ENCODE measurements at regions of chr3 and their contacts with region 1.

Region 1: GRCh38 chr3:152471814-152472671 is 203.3 kb downstream of the MBNL1 start:
- DNase-seq: peak; percentile 86
- ATAC-seq: peak; percentile 82
- H3K4me3 ChIP-seq: peak overlapping the region; percentile 32 to 63 (median 54)
- H3K4me3 Mint-ChIP-seq: peak overlapping the region; percentile 60
- H3K27ac ChIP-seq: peak overlapping the region; percentile 75 to 83
- H3K27ac Mint-ChIP-seq: peak overlapping the region; percentile 84
- H3K4me1 ChIP-seq: peaks cover 12 to 14% of the 10 kb centered on the region in 2 donors
- H3K4me1 Mint-ChIP-seq: peaks cover 21% of the 10 kb centered on the region
- H3K27me3 ChIP-seq: no peaks in the 10 kb centered on the region
- H3K27me3 Mint-ChIP-seq: no peaks in the 10 kb centered on the region
- CTCF ChIP-seq: peak; percentile 89

Region 2: GRCh38 chr3:152060701-152061100 is 411.3 kb before region 1 on chr3:
- CTCF ChIA-PET with region 1: no interaction called
- POLR2A ChIA-PET with region 1: no interaction called
- intact Hi-C with region 1: no loop called
- DNase-seq: no peak
- ATAC-seq: no peak
- H3K4me3 ChIP-seq: no peak overlapping the region
- H3K4me3 Mint-ChIP-seq: no peak overlapping the region
- H3K27ac ChIP-seq: no peak overlapping the region
- H3K27ac Mint-ChIP-seq: no peak overlapping the region
- H3K4me1 ChIP-seq: no peaks in the 10 kb centered on the region
- H3K4me1 Mint-ChIP-seq: no peaks in the 10 kb centered on the region
- H3K27me3 ChIP-seq: no peaks in the 10 kb centered on the region
- H3K27me3 Mint-ChIP-seq: peaks cover 3% of the 10 kb centered on the region
- CTCF ChIP-seq: no peak

Region 3: DNA sequence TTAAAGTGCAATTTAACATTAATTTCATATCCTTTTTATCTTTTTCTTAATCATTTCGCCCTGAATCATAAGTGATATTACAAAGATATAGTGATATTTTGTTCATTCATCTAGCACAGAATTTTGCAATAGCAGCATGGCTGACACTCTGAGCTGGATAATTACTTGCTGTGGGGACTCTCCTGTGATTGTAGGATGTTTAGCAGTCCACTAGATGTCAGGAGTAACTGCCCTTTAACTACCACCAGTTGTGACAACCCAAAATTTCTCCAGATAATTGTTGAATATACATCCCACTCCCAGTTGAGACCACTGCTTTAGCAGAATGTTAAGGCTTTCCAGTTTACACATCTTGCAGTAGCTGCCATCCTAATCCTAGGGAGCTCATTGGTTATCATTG is 400.1 kb before region 1 on chr3:
- CTCF ChIA-PET with region 1: interaction called, 20 read pairs
- POLR2A ChIA-PET with region 1: no interaction called
- intact Hi-C with region 1: loop called (anchors 2 kb)
- DNase-seq: peak; percentile 30
- ATAC-seq: no peak
- H3K4me3 ChIP-seq: no peak overlapping the region
- H3K4me3 Mint-ChIP-seq: no peak overlapping the region
- H3K27ac ChIP-seq: no peak overlapping the region
- H3K27ac Mint-ChIP-seq: no peak overlapping the region
- H3K4me1 ChIP-seq: no peaks in the 10 kb centered on the region
- H3K4me1 Mint-ChIP-seq: no peaks in the 10 kb centered on the region
- H3K27me3 ChIP-seq: peaks cover 0 to 3% (median 0%) of the 10 kb centered on the region in 4 experiments
- H3K27me3 Mint-ChIP-seq: no peaks in the 10 kb centered on the region
- CTCF ChIP-seq: peak; percentile 49

Region 4: GRCh38 chr3:152399374-152399773 is 72.7 kb before region 1 on chr3:
- CTCF ChIA-PET with region 1: no interaction called
- POLR2A ChIA-PET with region 1: no interaction called
- intact Hi-C with region 1: no loop called
- DNase-seq: no peak
- ATAC-seq: no peak
- H3K4me3 ChIP-seq: no peak overlapping the region
- H3K4me3 Mint-ChIP-seq: no peak overlapping the region
- H3K27ac ChIP-seq: peak overlapping the region in 1 of 2 donors; percentile 61
- H3K27ac Mint-ChIP-seq: no peak overlapping the region
- H3K4me1 ChIP-seq: peaks cover 11 to 47% of the 10 kb centered on the region in 2 donors
- H3K4me1 Mint-ChIP-seq: peaks cover 60% of the 10 kb centered on the region
- H3K27me3 ChIP-seq: no peaks in the 10 kb centered on the region
- H3K27me3 Mint-ChIP-seq: no peaks in the 10 kb centered on the region
- CTCF ChIP-seq: no peak

Region 5: GRCh38 chr3:152460936-152461335 is 11.1 kb before region 1 on chr3:
- CTCF ChIA-PET with region 1: interaction called, 10 read pairs
- POLR2A ChIA-PET with region 1: no interaction called
- intact Hi-C with region 1: no loop called
- DNase-seq: no peak
- ATAC-seq: no peak
- H3K4me3 ChIP-seq: no peak overlapping the region
- H3K4me3 Mint-ChIP-seq: no peak overlapping the region
- H3K27ac ChIP-seq: peak overlapping the region in 1 of 2 donors; percentile 56
- H3K27ac Mint-ChIP-seq: peak overlapping the region; percentile 63
- H3K4me1 ChIP-seq: peaks cover 0 to 7% of the 10 kb centered on the region in 2 donors
- H3K4me1 Mint-ChIP-seq: peaks cover 24% of the 10 kb centered on the region
- H3K27me3 ChIP-seq: no peaks in the 10 kb centered on the region
- H3K27me3 Mint-ChIP-seq: no peaks in the 10 kb centered on the region
- CTCF ChIP-seq: no peak

Region 6: GRCh38 chr3:152519376-152519775 is 47.3 kb after region 1 on chr3:
- CTCF ChIA-PET with region 1: interaction called, 130 read pairs
- POLR2A ChIA-PET with region 1: interaction called, 5 read pairs
- intact Hi-C with region 1: loop called (anchors 1 kb)
- DNase-seq: no peak
- ATAC-seq: no peak
- H3K4me3 ChIP-seq: no peak overlapping the region
- H3K4me3 Mint-ChIP-seq: no peak overlapping the region
- H3K27ac ChIP-seq: no peak overlapping the region
- H3K27ac Mint-ChIP-seq: peak overlapping the region; percentile 33
- H3K4me1 ChIP-seq: peaks cover 43 to 45% of the 10 kb centered on the region in 2 donors
- H3K4me1 Mint-ChIP-seq: peaks cover 62% of the 10 kb centered on the region
- H3K27me3 ChIP-seq: no peaks in the 10 kb centered on the region
- H3K27me3 Mint-ChIP-seq: no peaks in the 10 kb centered on the region
- CTCF ChIP-seq: no peak

Region 7: DNA sequence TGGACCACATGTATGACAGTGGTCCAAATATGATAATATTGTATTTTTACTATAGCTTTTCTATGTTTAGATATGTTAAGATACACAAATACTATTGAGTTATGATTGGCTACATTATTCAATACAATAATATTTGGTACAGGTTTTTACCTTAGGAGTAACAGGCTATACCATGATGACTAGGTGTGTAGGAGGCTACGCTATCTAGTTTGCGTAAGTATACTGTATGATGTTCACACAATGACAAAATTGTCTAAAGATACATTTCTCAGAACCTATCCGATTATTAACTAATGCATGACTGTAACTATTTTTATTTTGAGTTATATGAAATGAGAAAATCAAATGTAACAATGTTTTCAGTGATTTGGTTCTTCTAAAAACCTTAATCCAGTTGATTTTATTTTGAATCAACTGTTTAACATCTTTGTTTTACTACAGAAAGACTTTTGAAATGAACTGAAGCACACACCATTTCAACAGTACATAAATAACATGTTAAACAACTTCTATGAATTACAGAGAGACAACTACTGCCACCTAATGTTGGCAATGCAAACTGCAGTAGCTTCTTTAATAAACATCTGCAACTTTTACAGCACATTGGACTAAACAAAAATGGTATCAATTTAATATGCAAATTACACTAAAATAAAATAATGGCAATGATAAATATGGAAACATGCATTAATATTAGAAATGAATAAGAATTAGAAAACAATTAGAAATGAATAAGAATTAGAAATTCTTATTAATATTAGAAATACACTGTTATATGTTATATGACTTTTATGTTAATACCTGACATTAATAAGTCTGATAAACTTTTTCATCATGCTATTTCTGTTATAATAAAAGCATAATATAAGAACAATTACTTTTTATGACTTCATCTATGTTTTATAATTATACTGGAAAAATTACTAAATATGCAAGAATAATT is 52.4 kb after region 1 on chr3:
- CTCF ChIA-PET with region 1: interaction called, 130 read pairs
- POLR2A ChIA-PET with region 1: no interaction called
- intact Hi-C with region 1: loop called (anchors 1 kb)
- DNase-seq: peak; percentile 76
- ATAC-seq: peak; percentile 68
- H3K4me3 ChIP-seq: no peak overlapping the region
- H3K4me3 Mint-ChIP-seq: no peak overlapping the region
- H3K27ac ChIP-seq: no peak overlapping the region
- H3K27ac Mint-ChIP-seq: no peak overlapping the region
- H3K4me1 ChIP-seq: peaks cover 5 to 6% of the 10 kb centered on the region in 2 donors
- H3K4me1 Mint-ChIP-seq: peaks cover 22% of the 10 kb centered on the region
- H3K27me3 ChIP-seq: no peaks in the 10 kb centered on the region
- H3K27me3 Mint-ChIP-seq: no peaks in the 10 kb centered on the region
- CTCF ChIP-seq: peak; percentile 98

Region 8: GRCh38 chr3:152574461-152575079 is 102.5 kb after region 1 on chr3:
- CTCF ChIA-PET with region 1: interaction called, 22 read pairs
- POLR2A ChIA-PET with region 1: no interaction called
- intact Hi-C with region 1: loop called (anchors 1 kb)
- DNase-seq: peak; percentile 65
- ATAC-seq: peak; percentile 61
- H3K4me3 ChIP-seq: no peak overlapping the region
- H3K4me3 Mint-ChIP-seq: no peak overlapping the region
- H3K27ac ChIP-seq: no peak overlapping the region
- H3K27ac Mint-ChIP-seq: no peak overlapping the region
- H3K4me1 ChIP-seq: no peaks in the 10 kb centered on the region
- H3K4me1 Mint-ChIP-seq: peaks cover 2% of the 10 kb centered on the region
- H3K27me3 ChIP-seq: no peaks in the 10 kb centered on the region
- H3K27me3 Mint-ChIP-seq: no peaks in the 10 kb centered on the region
- CTCF ChIP-seq: peak; percentile 74

Region 9: DNA sequence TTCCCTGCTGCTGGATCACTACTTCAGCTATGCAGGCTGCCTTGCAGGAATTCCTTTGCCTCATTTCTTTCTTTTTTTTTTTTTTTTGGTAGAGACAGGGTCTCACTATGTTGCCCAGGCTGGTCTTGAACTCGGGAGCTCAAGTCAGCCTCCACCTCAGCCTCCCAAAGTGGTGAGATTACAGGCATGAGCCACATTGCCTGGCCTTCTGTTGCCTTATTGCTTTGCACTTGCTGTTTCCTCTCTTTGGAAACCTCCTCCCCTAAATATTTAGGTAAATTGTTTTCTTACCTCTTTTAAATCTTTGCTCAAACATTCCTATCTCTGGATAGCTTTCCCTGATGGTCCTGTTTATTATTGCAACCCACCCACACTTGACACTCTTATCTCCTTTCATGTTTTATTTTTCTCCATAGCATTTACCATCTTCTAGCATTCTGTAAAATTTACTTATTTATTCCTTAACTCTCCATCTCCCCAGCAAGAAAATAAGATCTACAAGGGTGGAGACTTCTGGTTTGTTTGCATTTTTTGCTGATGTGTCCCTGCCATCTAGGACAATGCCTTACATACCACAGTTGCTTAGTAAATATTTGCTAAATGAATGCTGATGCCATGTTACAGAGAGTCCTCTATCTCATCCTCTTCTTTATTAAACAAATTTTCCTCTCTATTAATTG is 497.7 kb after region 1 on chr3:
- CTCF ChIA-PET with region 1: no interaction called
- POLR2A ChIA-PET with region 1: no interaction called
- intact Hi-C with region 1: no loop called
- DNase-seq: no peak
- ATAC-seq: no peak
- H3K4me3 ChIP-seq: no peak overlapping the region
- H3K4me3 Mint-ChIP-seq: no peak overlapping the region
- H3K27ac ChIP-seq: no peak overlapping the region
- H3K27ac Mint-ChIP-seq: no peak overlapping the region
- H3K4me1 ChIP-seq: peaks cover 4 to 8% of the 10 kb centered on the region in 2 donors
- H3K4me1 Mint-ChIP-seq: peaks cover 8% of the 10 kb centered on the region
- H3K27me3 ChIP-seq: no peaks in the 10 kb centered on the region
- H3K27me3 Mint-ChIP-seq: peaks cover 5% of the 10 kb centered on the region
- CTCF ChIP-seq: no peak

Region 10: DNA sequence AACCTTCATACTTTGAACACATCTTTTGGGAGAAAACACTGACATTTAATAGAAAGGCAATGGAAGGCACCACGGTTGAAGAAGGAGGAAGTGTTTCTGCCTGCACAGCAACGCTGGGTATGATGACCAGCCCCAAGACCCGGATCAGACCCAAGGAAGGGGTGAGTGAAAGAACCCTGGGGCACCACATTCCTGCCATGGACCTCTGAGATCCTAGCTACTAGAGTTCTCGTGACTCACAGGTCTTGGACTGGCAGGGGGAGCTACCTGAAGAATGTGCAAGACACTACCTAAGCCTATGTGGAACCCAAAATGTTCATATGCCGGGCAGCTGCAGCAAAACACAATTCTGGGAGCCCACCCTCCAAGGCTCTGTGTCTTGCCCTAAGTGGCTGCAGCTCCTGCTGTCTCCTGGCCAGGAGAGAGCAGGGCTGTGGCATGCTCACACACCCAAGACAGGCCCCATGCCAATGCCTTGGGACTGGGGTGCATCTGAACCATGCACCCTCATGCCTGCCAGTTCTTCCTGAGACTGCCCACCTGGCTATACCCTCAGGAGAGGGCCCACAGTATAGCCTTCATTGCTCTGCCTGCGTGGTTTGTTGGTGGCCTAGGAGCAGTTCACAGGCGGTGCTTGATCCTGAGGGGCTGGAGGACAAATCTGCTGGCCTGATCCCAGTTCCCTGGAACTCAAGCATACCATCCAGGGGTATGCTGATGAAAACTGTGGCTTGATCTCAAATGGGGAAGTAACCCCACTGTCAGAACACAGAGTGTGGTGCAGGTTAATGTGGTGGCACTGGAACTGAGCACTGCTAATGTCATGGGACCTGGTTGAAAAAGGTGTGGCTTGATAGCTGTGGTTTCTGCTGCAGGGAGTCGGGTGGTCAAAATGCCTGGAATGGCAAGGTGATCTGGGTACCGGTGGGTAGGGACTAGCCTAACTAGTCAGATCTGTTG is 1295.8 kb after region 1 on chr3:
- CTCF ChIA-PET with region 1: no interaction called
- POLR2A ChIA-PET with region 1: no interaction called
- intact Hi-C with region 1: no loop called
- DNase-seq: peak; percentile 3
- ATAC-seq: no peak
- H3K4me3 ChIP-seq: no peak overlapping the region
- H3K4me3 Mint-ChIP-seq: no peak overlapping the region
- H3K27ac ChIP-seq: no peak overlapping the region
- H3K27ac Mint-ChIP-seq: no peak overlapping the region
- H3K4me1 ChIP-seq: no peaks in the 10 kb centered on the region
- H3K4me1 Mint-ChIP-seq: no peaks in the 10 kb centered on the region
- H3K27me3 ChIP-seq: no peaks in the 10 kb centered on the region
- H3K27me3 Mint-ChIP-seq: peaks cover 3% of the 10 kb centered on the region
- CTCF ChIP-seq: no peak

Measured in B cell (primary cell).